Heart right ventricle (tissue), 16 donors: ENCODE measurements at regions of chr5 and their contacts with region 1.

Region 1: DNA sequence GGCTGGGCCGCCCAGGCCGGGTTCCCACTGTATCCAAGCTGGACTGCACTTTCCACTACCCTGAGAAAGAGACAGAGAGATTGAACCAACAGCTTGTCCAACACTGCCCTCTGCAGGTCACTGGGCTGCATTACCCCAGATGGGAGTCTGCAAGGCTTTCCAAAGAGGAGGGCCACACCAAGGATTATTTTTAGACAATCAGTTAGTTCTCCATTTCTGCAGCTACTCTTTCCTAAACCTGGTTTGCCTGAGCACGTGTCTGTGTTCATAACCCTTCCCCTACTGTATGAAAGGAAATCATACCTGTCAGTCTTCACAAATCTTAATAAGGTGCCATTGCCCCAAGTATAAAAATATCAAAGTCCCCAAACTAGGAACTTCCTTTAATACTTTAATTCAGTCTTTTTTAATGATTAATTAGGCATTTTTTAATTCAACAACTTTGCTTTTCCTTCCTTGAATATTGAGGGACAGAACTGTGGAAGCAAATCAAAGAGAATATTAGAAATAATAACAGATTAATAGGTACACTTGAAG is 13.4 kb upstream of the FGF1 start:
- DNase-seq: peak; percentile 87 to 93
- ATAC-seq: peak; percentile 83 to 92 (median 90)
- H3K4me3 ChIP-seq: no peak overlapping the region
- H3K27ac ChIP-seq: peak overlapping the region; percentile 56 to 94 (median 87)
- H3K4me1 ChIP-seq: peaks cover 9 to 55% (median 39%) of the 10 kb centered on the region in 9 donors
- H3K27me3 ChIP-seq: no peaks in the 10 kb centered on the region
- CTCF ChIP-seq: peak; percentile 94 to 99 (median 97)

Region 2: DNA sequence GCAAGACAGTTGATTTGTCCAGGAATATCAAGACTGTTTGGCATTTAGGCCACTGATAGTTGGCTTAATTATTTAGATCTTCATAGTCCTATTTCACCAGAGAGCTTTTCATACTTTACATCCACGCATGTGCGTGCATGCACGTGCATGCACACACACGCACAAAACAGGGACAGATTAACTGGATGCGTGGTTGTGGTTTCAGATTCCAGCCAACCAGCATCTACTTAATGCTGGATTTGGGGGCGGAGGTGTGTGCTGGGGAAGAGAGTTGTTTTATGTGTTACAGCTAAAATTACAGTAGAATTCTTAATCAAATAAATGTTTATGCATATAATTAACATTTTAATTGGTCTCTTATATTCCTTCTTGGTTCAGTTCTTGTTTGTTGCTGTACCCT is 723.1 kb before region 1 on chr5:
- intact Hi-C with region 1: no loop called
- DNase-seq: no peak
- ATAC-seq: no peak
- H3K4me3 ChIP-seq: no peak overlapping the region
- H3K27ac ChIP-seq: no peak overlapping the region
- H3K4me1 ChIP-seq: peaks cover 0 to 54% (median 18%) of the 10 kb centered on the region in 9 donors
- H3K27me3 ChIP-seq: no peaks in the 10 kb centered on the region
- CTCF ChIP-seq: no peak

Region 3: GRCh38 chr5:142012792-142013388 is 686.4 kb before region 1 on chr5 and contains the start of gene GNPDA1:
- intact Hi-C with region 1: loop called in 2 of 10 experiments (anchors 10 kb)
- DNase-seq: peak; percentile 82 to 83
- ATAC-seq: peak; percentile 88 to 98 (median 92)
- H3K4me3 ChIP-seq: peak within 1 kb of the TSS; percentile 45 to 85 (median 77)
- H3K27ac ChIP-seq: peak within 1 kb of the TSS; percentile 18 to 94 (median 87)
- H3K4me1 ChIP-seq: peaks cover 0 to 51% (median 10%) of the 10 kb centered on the region in 9 donors
- H3K27me3 ChIP-seq: no peaks in the 10 kb centered on the region
- CTCF ChIP-seq: peak in 3 of 9 donors; percentile 20 to 38 (median 26)
- total RNA-seq, gene GNPDA1: 18.9 to 24.3 (median 20.9) TPM

Region 4: GRCh38 chr5:142151436-142152383 is 547.5 kb before region 1 on chr5:
- intact Hi-C with region 1: loop called in 9 of 10 experiments (anchors 2 to 10 kb)
- DNase-seq: peak in 1 of 2 donors; percentile 80
- ATAC-seq: peak in 7 of 8 donors; percentile 59 to 75 (median 70)
- H3K4me3 ChIP-seq: no peak overlapping the region
- H3K27ac ChIP-seq: peak overlapping the region in 2 of 10 donors; percentile 16 to 24
- H3K4me1 ChIP-seq: peaks cover 0 to 12% (median 7%) of the 10 kb centered on the region in 9 donors
- H3K27me3 ChIP-seq: no peaks in the 10 kb centered on the region
- CTCF ChIP-seq: peak; percentile 79 to 93 (median 85)

Region 5: GRCh38 chr5:142611154-142611553 is 88.1 kb before region 1 on chr5:
- intact Hi-C with region 1: loop called (anchors 1 to 5 kb)
- DNase-seq: peak; percentile 63 to 81
- ATAC-seq: peak; percentile 75 to 88 (median 86)
- H3K4me3 ChIP-seq: no peak overlapping the region
- H3K27ac ChIP-seq: peak overlapping the region in 1 of 10 donors; percentile 5
- H3K4me1 ChIP-seq: peaks cover 0 to 37% (median 3%) of the 10 kb centered on the region in 9 donors
- H3K27me3 ChIP-seq: peaks cover 0 to 3% (median 0%) of the 10 kb centered on the region in 7 donors
- CTCF ChIP-seq: peak; percentile 91 to 97 (median 93)